ENCODE measurements at regions of chr10 and their contacts with region 1.

Region 1: GRCh38 chr10:69202332-69202731 is 17.8 kb upstream of the HKDC1 start:
- DNase-seq: no peak
- ATAC-seq: peak; percentile 44
- H3K4me3 Mint-ChIP-seq: no peak overlapping the region
- H3K27ac Mint-ChIP-seq: peak overlapping the region; percentile 67
- H3K4me1 Mint-ChIP-seq: peaks cover 43% of the 10 kb centered on the region
- H3K27me3 Mint-ChIP-seq: no peaks in the 10 kb centered on the region

Region 2: DNA sequence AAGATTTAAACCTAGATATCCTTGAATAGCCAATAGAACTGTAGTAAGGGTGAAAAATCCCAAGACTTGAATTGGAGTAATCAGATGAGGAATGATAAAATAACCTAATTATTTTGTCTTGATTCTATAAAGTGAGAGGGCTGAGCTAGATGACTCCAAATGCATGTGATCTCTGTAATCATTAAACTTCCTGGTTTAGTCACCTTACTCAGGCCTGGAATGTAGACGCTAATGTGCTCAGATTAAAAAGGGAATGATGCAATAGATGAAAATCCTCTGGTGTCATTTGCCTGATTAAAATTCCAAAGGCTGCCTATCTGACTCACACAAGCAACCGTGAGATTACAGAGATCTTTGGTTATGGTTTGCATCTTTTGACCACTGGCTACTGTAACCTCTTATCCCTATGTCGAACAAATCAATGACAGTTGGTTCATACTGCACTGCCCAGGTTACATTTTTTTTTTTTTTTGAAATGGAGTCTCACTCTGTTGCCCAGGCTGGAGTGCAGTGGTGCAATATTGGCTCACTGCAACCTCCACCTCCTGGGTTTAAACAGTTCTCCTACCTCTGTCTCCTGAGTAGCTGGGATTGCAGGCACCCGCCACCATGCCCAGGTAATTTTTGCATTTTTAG is 14.9 kb after region 1 on chr10:
- POLR2A ChIA-PET with region 1: interaction called, 22 read pairs
- DNase-seq: no peak
- ATAC-seq: no peak
- H3K4me3 Mint-ChIP-seq: no peak overlapping the region
- H3K27ac Mint-ChIP-seq: no peak overlapping the region
- H3K4me1 Mint-ChIP-seq: peaks cover 38% of the 10 kb centered on the region
- H3K27me3 Mint-ChIP-seq: peaks cover 10% of the 10 kb centered on the region

Region 3: GRCh38 chr10:69318106-69318866 is 116.0 kb after region 1 on chr10:
- POLR2A ChIA-PET with region 1: no interaction called
- DNase-seq: peak; percentile 96
- ATAC-seq: peak; percentile 84
- H3K4me3 Mint-ChIP-seq: peak overlapping the region; percentile 91
- H3K27ac Mint-ChIP-seq: peak overlapping the region; percentile 92
- H3K4me1 Mint-ChIP-seq: peaks cover 37% of the 10 kb centered on the region
- H3K27me3 Mint-ChIP-seq: no peaks in the 10 kb centered on the region

Measured in activated naive CD8-positive, alpha-beta T cell treated with anti-CD3 and anti-CD28 coated beads, Interleukin-2, amount 10 ng/mL, durations not matched to agents 7 days and 5 days (primary cell).